ENCODE measurements at regions of chr10 and their contacts with region 1.

Region 1: GRCh38 chr10:121860810-121861209 is 67.0 kb downstream of the ATE1 start:
- DNase-seq: no peak
- H3K4me3 ChIP-seq: no peak overlapping the region
- H3K27ac ChIP-seq: no peak overlapping the region
- H3K4me1 ChIP-seq: no peaks in the 10 kb centered on the region
- H3K27me3 ChIP-seq: no peaks in the 10 kb centered on the region
- CTCF ChIP-seq: no peak

Region 2: GRCh38 chr10:121741248-121741792 is 119.5 kb before region 1 on chr10:
- CTCF ChIA-PET with region 1: no interaction called
- dilution Hi-C with region 1: loop called (anchors 10 kb)
- in situ Hi-C with region 1: no loop called
- intact Hi-C with region 1: no loop called
- DNase-seq: peak; percentile 28
- H3K4me3 ChIP-seq: no peak overlapping the region
- H3K27ac ChIP-seq: no peak overlapping the region
- H3K4me1 ChIP-seq: no peaks in the 10 kb centered on the region
- H3K27me3 ChIP-seq: no peaks in the 10 kb centered on the region
- CTCF ChIP-seq: no peak

Region 3: DNA sequence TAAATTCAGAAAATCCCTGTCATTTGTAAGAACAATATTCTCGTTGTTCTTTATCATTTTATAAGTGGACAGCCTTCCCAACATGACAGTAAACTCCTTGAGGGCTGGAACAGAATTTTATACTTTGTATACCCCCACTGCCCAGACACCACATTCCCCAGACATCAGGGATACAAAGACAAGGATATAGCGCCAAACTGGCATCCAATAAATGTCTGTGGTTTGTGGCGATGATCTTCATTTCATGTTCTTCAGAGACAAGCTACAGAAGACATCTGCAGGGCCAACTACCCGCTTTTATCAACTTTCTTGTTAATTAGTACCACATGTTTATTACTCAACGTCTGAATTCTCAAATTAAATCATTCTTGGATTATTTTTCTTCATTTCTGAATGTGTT is 88.8 kb before region 1 on chr10:
- CTCF ChIA-PET with region 1: no interaction called
- dilution Hi-C with region 1: loop called (anchors 5 kb)
- in situ Hi-C with region 1: no loop called
- intact Hi-C with region 1: no loop called
- DNase-seq: no peak
- H3K4me3 ChIP-seq: no peak overlapping the region
- H3K27ac ChIP-seq: no peak overlapping the region
- H3K4me1 ChIP-seq: no peaks in the 10 kb centered on the region
- H3K27me3 ChIP-seq: no peaks in the 10 kb centered on the region
- CTCF ChIP-seq: no peak

Region 4: DNA sequence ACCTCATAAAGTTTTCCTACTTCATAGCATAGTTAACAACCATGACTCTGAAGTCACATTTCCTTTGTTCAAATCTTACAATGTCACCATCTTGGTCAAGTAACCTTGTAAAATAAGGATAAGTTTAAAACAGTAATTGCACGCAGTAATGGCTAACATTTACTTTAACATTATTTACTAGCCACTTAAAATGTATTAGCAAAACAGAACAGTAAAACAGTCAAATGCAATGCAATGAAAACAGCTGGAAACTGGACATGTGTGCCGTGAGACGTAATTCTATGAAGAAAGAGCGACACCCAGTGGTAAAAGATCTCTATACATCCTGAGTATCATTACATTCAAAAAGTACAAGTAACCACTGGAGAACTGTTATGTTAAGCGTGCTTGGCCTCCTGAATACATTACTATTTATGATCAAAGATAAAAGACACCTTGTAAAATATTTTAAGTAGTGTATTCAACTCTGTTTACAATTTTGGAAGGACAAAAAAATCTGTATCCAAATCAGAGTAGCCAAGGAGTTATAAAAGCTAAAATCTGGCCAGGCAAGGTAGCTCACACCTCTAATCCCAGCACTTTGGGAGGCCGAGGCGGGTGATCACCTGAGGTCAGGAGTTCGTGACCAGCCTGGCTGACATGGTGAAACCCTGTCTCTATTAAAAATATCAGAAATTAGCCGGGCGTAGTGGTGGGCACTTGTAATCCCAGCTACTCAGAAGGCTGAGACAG is 39.8 kb after region 1 on chr10:
- CTCF ChIA-PET with region 1: interaction called, 3 read pairs
- dilution Hi-C with region 1: loop called (anchors 5 kb)
- in situ Hi-C with region 1: no loop called
- intact Hi-C with region 1: no loop called
- DNase-seq: peak; percentile 45
- H3K4me3 ChIP-seq: no peak overlapping the region
- H3K27ac ChIP-seq: no peak overlapping the region
- H3K4me1 ChIP-seq: no peaks in the 10 kb centered on the region
- H3K27me3 ChIP-seq: no peaks in the 10 kb centered on the region
- CTCF ChIP-seq: peak; percentile 68